Activated B cell treated with CpG ODN at 0.5 μM for 24 hours (primary cell): ENCODE measurements at regions of chr3 and their contacts with region 1.

Region 1: GRCh38 chr3:63226529-63226928 is 51.6 kb upstream of the SYNPR start:
- DNase-seq: no peak
- ATAC-seq: no peak
- H3K4me3 Mint-ChIP-seq: no peak overlapping the region
- H3K27ac Mint-ChIP-seq: no peak overlapping the region
- H3K4me1 Mint-ChIP-seq: peaks cover 2% of the 10 kb centered on the region
- H3K27me3 Mint-ChIP-seq: no peaks in the 10 kb centered on the region
- CTCF ChIP-seq: no peak

Region 2: DNA sequence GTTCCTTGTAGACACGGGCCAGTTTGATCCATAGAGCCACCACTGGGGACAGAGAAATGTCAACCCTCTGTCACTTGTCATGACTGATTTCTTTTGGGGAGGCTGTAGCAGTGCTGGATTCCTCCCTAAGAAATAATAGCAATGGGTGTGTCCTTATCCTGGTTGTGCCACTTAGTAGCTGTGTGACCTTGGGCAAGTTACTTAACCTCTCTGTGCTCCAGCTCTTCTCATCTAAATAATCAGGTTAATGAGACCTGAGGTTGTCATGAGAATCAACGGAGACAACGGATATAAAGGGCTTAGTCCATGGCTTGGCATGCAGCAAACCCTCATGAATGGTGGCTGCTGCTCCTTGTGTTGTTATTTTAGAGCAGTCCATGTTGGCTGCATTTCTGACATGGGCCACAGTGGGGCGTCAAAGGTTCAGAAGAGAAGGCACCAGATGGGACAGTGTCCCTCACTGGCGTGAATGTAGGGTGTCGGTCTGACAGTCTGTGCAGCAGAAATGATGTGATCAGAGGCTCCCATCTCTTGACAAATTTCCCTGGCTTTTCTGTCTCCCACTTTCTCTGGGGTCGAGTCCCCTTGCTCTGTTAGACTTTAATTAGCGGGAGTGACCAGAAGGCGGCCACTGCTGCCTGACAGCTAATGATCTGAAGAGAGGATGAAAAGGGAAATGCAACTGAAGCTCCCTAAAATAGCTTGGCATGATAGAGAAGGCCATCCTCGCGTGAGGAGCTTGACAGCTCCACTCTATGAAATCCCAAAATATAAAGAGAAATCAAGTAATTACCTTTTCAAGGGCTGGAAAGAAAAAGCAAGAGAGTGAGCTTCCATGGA is 560.7 kb before region 1 on chr3:
- CTCF ChIA-PET with region 1: interaction called, 5 read pairs
- POLR2A ChIA-PET with region 1: no interaction called
- intact Hi-C with region 1: loop called (anchors 2 kb)
- DNase-seq: no peak
- ATAC-seq: no peak
- H3K4me3 Mint-ChIP-seq: no peak overlapping the region
- H3K27ac Mint-ChIP-seq: no peak overlapping the region
- H3K4me1 Mint-ChIP-seq: no peaks in the 10 kb centered on the region
- H3K27me3 Mint-ChIP-seq: no peaks in the 10 kb centered on the region
- CTCF ChIP-seq: no peak

Region 3: DNA sequence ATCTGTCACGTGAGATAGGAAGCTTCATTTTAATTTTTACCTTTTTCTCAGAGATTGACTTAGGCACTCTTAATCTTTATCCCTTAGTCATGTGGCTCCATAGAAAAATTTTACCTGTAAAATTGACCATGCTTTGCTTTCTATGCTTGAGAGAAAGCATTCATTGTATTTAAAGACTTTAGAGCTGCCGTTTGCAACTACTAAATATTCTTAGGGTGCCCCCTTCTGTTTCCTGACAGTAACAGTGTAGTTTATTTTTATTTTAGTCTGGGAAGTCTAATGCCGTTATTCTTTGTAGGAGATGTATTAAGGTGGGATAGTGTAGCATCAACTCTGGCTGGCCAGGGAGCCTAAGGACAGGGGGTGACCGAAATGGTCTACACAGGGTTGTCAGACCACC is 32.9 kb before region 1 on chr3:
- CTCF ChIA-PET with region 1: no interaction called
- POLR2A ChIA-PET with region 1: no interaction called
- intact Hi-C with region 1: no loop called
- DNase-seq: no peak
- ATAC-seq: no peak
- H3K4me3 Mint-ChIP-seq: no peak overlapping the region
- H3K27ac Mint-ChIP-seq: no peak overlapping the region
- H3K4me1 Mint-ChIP-seq: no peaks in the 10 kb centered on the region
- H3K27me3 Mint-ChIP-seq: peaks cover 5% of the 10 kb centered on the region
- CTCF ChIP-seq: no peak